ENCODE measurements at regions of chr3 and their contacts with region 1.

Region 1: GRCh38 chr3:99023590-99024192 is 122.2 kb upstream of the DCBLD2 start:
- DNase-seq: no peak
- ATAC-seq: no peak
- H3K4me3 Mint-ChIP-seq: no peak overlapping the region
- H3K27ac Mint-ChIP-seq: no peak overlapping the region
- H3K4me1 Mint-ChIP-seq: no peaks in the 10 kb centered on the region
- H3K27me3 Mint-ChIP-seq: peaks cover 8% of the 10 kb centered on the region

Region 2: DNA sequence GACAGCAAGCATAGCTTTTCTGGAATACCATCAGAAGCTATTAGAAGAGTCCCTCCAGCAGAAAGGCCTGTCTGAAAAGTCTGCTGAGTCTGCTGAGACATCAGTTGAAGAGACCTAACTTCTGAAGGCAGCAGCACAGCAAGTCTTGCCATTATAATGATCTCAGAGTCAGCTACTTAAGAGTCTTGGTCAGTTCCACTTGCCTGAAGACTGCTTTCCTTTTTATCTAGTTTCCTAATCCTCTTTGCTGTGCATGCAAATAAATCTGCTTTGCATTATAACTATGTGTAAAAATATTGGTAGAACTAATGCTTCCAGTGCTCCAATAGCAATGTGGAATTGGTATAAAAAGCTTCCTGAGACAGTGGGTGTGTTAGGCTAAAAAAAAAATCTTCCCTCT is 395.4 kb before region 1 on chr3:
- CTCF ChIA-PET with region 1: no interaction called
- POLR2A ChIA-PET with region 1: no interaction called
- intact Hi-C with region 1: no loop called
- DNase-seq: no peak
- ATAC-seq: no peak
- H3K4me3 Mint-ChIP-seq: no peak overlapping the region
- H3K27ac Mint-ChIP-seq: no peak overlapping the region
- H3K4me1 Mint-ChIP-seq: no peaks in the 10 kb centered on the region
- H3K27me3 Mint-ChIP-seq: no peaks in the 10 kb centered on the region

Region 3: DNA sequence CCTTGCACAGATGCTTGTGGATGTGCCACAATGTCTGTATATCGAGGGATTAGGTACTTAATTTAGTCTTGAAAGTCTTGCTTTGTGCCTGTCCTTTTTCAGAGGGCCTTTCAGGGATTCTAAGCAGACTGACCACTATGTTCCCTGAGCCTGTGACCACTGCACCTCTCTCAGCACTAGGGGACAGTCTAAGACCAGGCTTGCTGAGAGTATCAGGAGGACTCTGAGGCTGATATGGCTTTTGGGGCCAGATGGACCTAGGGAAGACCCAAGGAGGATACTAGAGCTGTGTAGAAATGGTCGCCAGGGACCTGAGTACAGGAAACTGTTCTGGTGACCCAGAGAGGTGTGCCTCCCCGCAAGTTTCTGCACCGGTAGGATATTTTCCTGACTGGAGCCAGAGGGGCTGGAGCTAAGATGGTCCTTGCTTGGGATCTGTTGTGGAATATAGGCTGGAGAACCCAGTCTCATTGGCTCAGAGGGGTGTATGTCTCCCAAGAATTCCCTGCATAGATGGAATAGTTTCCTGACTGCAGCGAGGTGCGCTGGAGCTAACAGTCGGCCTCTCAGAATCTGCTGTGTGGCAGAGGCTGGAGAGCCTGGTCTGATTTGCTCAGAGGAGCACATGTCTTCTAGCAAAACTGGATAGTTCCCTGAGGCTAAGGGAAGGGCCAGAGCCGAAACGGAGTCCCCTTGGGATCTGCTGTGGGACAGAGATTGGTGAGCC is 91.0 kb after region 1 on chr3:
- CTCF ChIA-PET with region 1: no interaction called
- POLR2A ChIA-PET with region 1: no interaction called
- intact Hi-C with region 1: no loop called
- DNase-seq: no peak
- ATAC-seq: no peak
- H3K4me3 Mint-ChIP-seq: no peak overlapping the region
- H3K27ac Mint-ChIP-seq: no peak overlapping the region
- H3K4me1 Mint-ChIP-seq: no peaks in the 10 kb centered on the region
- H3K27me3 Mint-ChIP-seq: peaks cover 4% of the 10 kb centered on the region

Region 4: DNA sequence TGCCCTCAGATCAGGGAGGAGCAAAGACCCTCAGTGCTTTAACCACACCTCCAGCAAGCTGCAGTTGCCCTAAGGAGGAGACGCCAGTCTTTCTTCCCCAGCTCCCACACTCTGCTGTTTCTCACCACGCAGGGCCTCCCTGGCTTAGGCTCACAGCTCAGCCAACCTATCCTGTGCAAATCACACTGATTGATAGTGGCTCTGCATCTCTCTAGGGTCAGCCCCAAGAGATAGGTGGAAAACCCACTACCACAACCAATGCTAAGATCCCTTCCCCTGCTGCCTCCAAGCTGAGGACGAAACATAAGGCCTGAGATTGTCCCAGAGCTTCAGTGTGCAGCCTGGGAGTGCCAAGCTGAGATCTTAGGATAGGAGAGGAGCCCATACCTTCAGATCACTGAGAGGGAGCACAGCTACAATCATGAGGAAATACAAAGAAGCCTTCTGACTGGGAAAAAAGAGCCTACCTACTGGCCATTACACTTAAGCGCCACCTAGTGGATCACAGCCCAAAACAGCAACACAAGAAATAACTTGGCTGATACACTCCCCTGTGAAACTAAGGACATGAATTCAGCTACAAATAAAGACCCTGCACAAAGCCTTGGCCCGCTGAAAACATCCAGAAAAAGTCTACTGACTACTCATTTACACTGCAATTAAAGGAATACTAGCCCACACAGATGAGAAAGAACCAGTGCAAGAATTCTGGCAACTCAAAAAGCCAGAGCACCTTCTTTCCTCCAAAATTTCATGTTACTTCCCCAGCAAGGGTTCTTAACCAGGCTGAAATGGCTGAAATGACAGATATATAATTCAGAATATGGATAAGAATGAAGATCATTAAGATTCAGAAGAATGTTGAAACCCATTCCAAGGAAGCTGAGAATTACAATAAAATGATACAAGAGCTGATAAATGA is 149.3 kb after region 1 on chr3:
- CTCF ChIA-PET with region 1: interaction called, 5 read pairs
- POLR2A ChIA-PET with region 1: no interaction called
- intact Hi-C with region 1: loop called (anchors 1 to 2 kb)
- DNase-seq: peak; percentile 61
- ATAC-seq: peak; percentile 39
- H3K4me3 Mint-ChIP-seq: no peak overlapping the region
- H3K27ac Mint-ChIP-seq: no peak overlapping the region
- H3K4me1 Mint-ChIP-seq: no peaks in the 10 kb centered on the region
- H3K27me3 Mint-ChIP-seq: no peaks in the 10 kb centered on the region

Region 5: DNA sequence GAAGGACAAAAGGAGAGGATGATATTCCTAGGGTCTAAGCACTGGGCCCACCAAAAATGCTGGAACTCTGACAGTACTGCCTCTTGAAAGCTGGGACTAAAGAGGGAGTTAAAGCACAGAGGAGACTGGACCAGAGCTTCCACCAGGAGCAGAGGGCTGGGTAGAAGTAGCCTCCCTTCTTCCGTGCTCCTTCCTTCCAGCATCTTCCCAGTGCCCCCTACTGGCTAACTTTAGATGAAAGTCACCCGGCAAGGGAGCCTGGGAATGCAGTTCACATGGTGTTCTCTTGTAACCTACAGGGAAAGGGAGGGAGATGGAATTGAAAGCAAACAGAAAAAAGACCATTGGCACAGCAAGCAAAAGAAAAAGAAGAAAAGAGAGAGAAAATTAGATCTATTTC is 508.6 kb after region 1 on chr3:
- CTCF ChIA-PET with region 1: interaction called, 5 read pairs
- POLR2A ChIA-PET with region 1: no interaction called
- intact Hi-C with region 1: loop called in 1 of 2 experiments (anchors 5 kb)
- DNase-seq: peak; percentile 25
- ATAC-seq: no peak
- H3K4me3 Mint-ChIP-seq: no peak overlapping the region
- H3K27ac Mint-ChIP-seq: no peak overlapping the region
- H3K4me1 Mint-ChIP-seq: no peaks in the 10 kb centered on the region
- H3K27me3 Mint-ChIP-seq: peaks cover 2% of the 10 kb centered on the region

Region 6: DNA sequence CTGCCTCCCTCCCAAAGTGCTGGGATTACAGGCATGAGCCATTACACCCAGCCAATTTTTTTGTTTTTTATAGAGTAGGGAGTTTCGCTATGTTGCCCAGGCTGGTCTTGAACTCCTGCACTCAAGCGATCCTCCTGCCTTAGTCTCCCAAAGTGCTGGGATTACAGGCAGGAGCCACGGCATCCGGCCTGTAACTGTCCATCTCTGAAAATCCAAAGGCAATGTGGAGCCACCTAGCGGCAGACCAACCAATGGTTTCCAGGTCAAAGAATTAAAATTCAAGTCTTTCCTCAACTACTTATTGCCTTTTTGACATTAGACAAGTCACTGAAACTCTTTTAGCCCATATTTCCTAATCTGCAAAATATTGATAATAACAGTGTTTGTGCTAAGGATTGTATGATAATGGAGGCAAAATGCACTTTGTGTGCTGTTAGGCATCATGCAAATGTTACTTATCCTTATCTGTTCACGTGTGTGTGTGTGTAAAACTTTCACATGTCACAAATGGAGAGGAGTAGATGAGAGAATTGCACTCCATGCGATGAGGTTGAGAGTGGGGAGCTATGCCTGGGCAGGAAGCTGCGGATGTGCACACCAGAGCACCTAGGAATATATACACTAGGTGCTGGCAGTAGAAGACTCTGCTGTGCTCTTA is 663.4 kb after region 1 on chr3:
- CTCF ChIA-PET with region 1: interaction called, 3 read pairs
- POLR2A ChIA-PET with region 1: no interaction called
- intact Hi-C with region 1: loop called in 1 of 2 experiments (anchors 2 kb)
- DNase-seq: peak; percentile 75
- ATAC-seq: no peak
- H3K4me3 Mint-ChIP-seq: no peak overlapping the region
- H3K27ac Mint-ChIP-seq: no peak overlapping the region
- H3K4me1 Mint-ChIP-seq: no peaks in the 10 kb centered on the region
- H3K27me3 Mint-ChIP-seq: peaks cover 7% of the 10 kb centered on the region

Region 7: DNA sequence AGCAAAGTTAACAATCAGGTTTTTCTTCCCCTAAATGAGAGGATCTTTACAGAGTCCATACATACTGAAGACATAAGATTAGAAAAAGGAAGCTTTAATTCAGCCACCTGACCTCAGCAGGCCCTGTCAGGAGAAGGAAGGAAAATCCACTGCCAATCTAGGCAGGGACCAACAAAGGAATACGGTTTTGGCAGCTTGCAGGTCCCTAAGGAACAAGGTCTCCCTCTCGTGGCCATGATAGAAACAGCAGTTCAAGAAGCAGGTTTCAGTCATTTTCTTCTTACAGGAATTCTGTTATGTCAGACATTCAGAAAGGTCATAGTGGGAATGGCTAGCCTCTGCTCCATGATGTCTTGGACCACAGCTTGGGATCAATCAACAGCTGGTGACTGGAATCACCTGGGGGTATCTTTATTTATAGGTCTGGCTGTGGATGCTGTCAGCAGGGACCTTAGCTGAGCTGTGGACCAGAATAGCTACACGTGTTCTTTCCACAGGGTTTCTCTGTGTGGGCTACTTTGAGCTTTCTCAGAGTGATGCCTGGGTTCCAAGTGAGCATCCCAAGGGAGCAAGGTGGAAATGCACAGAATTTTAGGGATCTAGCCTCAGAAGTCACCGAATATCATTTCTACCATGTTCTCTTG is 784.6 kb after region 1 on chr3:
- CTCF ChIA-PET with region 1: no interaction called
- POLR2A ChIA-PET with region 1: no interaction called
- intact Hi-C with region 1: loop called in 1 of 2 experiments (anchors 5 kb)
- DNase-seq: peak; percentile 51
- ATAC-seq: no peak
- H3K4me3 Mint-ChIP-seq: no peak overlapping the region
- H3K27ac Mint-ChIP-seq: no peak overlapping the region
- H3K4me1 Mint-ChIP-seq: no peaks in the 10 kb centered on the region
- H3K27me3 Mint-ChIP-seq: no peaks in the 10 kb centered on the region

Measured in activated CD4-positive, alpha-beta T cell treated with anti-CD3 and anti-CD28 coated beads for 36 hours (primary cell).